ENCODE measurements at regions of chr7 and their contacts with region 1.

Region 1: GRCh38 chr7:100119062-100119700 is at the starts of genes CNPY4 and TAF6:
- DNase-seq: peak; percentile 96
- H3K4me3 Mint-ChIP-seq: peak within 1 kb of the TSS; percentile 95
- H3K27ac Mint-ChIP-seq: peak within 1 kb of the TSS; percentile 82
- H3K4me1 Mint-ChIP-seq: peaks cover 19% of the 10 kb centered on the region
- H3K27me3 Mint-ChIP-seq: no peaks in the 10 kb centered on the region
- total RNA-seq, gene CNPY4: 11.9 to 12.4 TPM
- total RNA-seq, gene TAF6: 54.3 to 63.7 TPM

Region 2: GRCh38 chr7:100081535-100082102 is 37.6 kb before region 1 on chr7 and contains the start of gene ZNF3:
- CTCF ChIA-PET with region 1: no interaction called
- POLR2A ChIA-PET with region 1: no interaction called
- intact Hi-C with region 1: loop called (anchors 1 kb)
- DNase-seq: peak; percentile 99
- H3K4me3 Mint-ChIP-seq: peak within 1 kb of the TSS; percentile 83
- H3K27ac Mint-ChIP-seq: peak within 1 kb of the TSS; percentile 85
- H3K4me1 Mint-ChIP-seq: peaks cover 29% of the 10 kb centered on the region
- H3K27me3 Mint-ChIP-seq: no peaks in the 10 kb centered on the region
- total RNA-seq, gene ZNF3: 18.0 to 18.6 TPM

Region 3: DNA sequence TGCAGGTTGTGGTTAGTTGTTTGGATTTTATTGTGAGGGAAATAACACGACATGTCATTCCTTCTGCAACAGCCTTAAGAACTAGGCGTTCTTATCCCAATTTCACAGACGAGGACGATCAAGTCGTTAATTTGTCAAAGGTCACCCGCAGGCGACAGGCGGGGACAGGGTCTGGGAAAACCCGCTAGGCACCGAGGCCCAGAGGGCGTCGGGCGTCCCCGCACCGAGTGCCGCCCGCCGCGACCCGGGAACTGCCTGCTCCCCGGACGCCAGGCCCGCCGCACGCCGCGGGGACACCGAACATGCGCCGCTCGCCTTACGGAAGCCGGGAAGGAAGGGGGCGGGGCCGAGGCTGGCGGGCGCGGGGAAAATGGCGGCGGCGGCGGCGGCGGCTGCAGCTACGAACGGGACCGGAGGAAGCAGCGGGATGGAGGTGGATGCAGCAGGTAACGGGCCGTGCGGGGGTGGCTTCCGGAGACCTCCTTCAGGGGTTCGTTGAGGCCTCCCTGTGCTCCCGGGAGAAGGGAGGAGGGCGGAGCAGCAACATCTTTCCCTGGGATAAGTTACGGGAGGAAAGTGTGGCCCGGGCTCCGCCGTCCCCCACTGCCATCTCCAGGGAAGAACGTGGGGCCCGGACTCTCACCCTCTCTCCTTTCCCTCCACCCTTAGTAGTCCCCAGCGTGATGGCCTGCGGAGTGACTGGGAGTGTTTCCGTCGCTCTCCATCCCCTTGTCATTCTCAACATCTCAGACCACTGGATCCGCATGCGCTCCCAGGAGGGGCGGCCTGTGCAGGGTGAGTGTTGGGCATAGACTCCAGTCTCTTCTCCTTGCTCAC is 30.3 kb before region 1 on chr7 and contains the start of gene COPS6:
- CTCF ChIA-PET with region 1: no interaction called
- POLR2A ChIA-PET with region 1: no interaction called
- intact Hi-C with region 1: loop called (anchors 2 kb)
- DNase-seq: peak; percentile 89
- H3K4me3 Mint-ChIP-seq: peak within 1 kb of the TSS; percentile 93
- H3K27ac Mint-ChIP-seq: peak within 1 kb of the TSS; percentile 95
- H3K4me1 Mint-ChIP-seq: peaks cover 40% of the 10 kb centered on the region
- H3K27me3 Mint-ChIP-seq: no peaks in the 10 kb centered on the region
- total RNA-seq, gene COPS6: 93.1 to 98.2 TPM

Measured in activated CD4-positive, alpha-beta memory T cell treated with anti-CD3 and anti-CD28 coated beads for 36 hours (primary cell).